SK-N-SH (cell line): ENCODE measurements at regions of chr16 and their contacts with region 1.

Region 1: DNA sequence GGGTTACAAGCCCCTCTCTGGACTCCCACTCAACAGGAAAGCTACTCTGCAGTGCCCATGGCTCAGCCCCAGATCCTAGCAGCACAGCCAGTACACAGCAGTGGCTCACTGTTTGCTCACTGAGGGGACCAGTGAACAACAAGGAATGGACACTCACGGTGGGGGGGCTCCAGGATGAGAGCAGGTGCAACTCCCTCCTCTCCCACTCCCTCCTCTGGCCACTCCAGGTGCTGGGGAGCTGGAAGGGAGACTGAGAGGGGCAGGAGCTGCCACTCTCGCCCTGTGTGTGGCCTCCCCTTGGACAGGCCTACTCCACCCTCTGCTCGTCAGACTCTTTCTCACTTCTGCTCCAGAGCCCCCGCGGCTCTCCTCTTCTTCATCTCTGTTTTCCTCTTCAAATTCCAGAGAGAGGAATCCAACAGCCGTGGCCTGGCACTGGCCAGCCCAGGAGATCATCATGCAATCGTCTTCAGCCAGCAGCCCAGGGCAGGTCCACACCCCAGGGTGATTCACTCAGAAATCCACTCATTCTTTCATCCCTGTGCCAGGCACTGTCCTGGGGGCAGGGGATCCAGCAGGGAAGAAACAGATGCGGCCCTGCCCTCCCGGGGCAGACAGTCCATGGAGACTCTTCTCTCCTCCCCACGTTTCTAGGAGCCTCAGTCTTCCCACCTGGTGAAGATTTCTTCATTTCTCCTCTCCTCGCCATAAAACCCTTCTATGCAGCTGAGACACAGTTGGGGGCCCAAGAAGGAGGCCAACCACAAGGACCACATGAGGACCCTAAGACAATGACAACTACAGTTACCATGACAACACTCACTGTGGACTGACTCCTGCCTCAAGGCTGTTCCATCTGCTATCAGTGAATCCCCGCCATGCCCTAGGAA is 30.7 kb downstream of the CFAP20 start:
- DNase-seq: no peak
- H3K4me3 ChIP-seq: no peak overlapping the region
- H3K27ac ChIP-seq: no peak overlapping the region
- H3K4me1 ChIP-seq: no peaks in the 10 kb centered on the region; a peak in 1 of 4 replicates
- H3K27me3 ChIP-seq: no peaks in the 10 kb centered on the region
- CTCF ChIP-seq: no peak
- EP300 ChIP-seq: no peak
- RAD21 ChIP-seq: no peak

Region 2: GRCh38 chr16:58025351-58026138 is 72.9 kb before region 1 on chr16 and contains the start of gene MMP15:
- CTCF ChIA-PET with region 1: interaction called, 24 read pairs
- POLR2A ChIA-PET with region 1: no interaction called
- DNase-seq: peak; percentile 87
- H3K4me3 ChIP-seq: peak within 1 kb of the TSS; percentile 64
- H3K27ac ChIP-seq: peak within 1 kb of the TSS in 1 of 2 experiments; percentile 69; a peak in 1 of 4 replicates
- H3K4me1 ChIP-seq: peaks cover 13 to 64% of the 10 kb centered on the region in 2 experiments
- H3K27me3 ChIP-seq: peaks cover 13% of the 10 kb centered on the region
- CTCF ChIP-seq: no peak
- EP300 ChIP-seq: no peak
- RAD21 ChIP-seq: no peak
- polyA plus RNA-seq, gene MMP15: 2.6 and 3.1 TPM in 2 replicates

Region 3: GRCh38 chr16:58032710-58033293 is 65.7 kb before region 1 on chr16:
- CTCF ChIA-PET with region 1: interaction called, 18 read pairs
- POLR2A ChIA-PET with region 1: no interaction called
- DNase-seq: peak; percentile 94
- H3K4me3 ChIP-seq: no peak overlapping the region; a peak in 1 of 4 replicates
- H3K27ac ChIP-seq: peak overlapping the region in 1 of 2 experiments; percentile 96; a peak in 2 of 4 replicates
- H3K4me1 ChIP-seq: peaks cover 0 to 68% of the 10 kb centered on the region in 2 experiments; a peak in 1 of 4 replicates
- H3K27me3 ChIP-seq: no peaks in the 10 kb centered on the region
- CTCF ChIP-seq: no peak
- EP300 ChIP-seq: peak in 1 of 2 experiments; percentile 86; a peak in 2 of 4 replicates
- RAD21 ChIP-seq: peak; percentile 3; the same call in 1 of the 2 replicates